ENCODE measurements at regions of chr12 and their contacts with region 1.

Region 1: DNA sequence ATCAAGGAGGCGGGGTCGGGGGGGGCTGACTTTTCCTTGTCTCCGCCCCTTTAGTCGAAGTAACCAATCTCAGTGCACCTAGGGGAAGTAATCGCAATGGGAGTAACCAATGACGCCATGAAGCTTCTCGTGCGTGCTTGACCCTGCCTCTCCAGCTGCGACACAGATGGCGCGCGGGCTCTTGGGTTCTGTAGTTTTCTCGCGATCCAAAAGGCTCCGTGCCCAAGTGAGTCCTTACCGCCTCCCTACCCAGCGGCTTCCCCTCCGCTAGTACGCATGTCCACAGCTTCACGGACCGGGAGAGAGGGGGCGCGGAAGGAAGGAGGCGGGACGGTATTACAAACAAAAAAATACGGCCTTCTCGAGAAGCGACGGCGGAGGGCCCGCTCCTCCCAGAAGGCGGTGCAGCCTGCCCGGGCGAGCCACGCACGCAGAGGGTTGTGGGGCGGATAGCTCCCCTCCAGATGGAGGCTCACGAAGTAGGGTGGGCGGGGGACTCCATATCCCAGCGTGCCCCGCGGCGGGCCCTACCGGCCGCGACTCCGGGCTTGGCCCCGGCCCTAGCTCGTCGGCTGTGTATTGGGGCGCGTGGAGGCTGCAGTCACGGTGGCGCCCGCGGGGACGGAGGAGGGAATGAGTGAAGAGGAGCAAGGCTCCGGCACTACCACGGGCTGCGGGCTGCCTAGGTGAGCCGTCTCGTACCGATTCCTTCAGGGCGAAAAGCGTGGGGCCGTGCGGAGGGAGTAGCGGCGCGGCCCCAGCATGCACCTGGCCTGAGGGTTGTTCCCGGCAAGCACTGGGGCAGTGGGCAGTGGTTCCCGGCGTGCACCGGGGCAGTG is at the start of gene TARBP2:
- DNase-seq: peak; percentile 99
- H3K4me3 Mint-ChIP-seq: peak within 1 kb of the TSS; percentile 80
- H3K27ac Mint-ChIP-seq: peak within 1 kb of the TSS; percentile 93
- H3K4me1 Mint-ChIP-seq: peaks cover 36% of the 10 kb centered on the region
- H3K27me3 Mint-ChIP-seq: no peaks in the 10 kb centered on the region
- CTCF ChIP-seq: no peak
- total RNA-seq, gene TARBP2: 26.4 and 27.8 TPM in 2 replicates

Region 2: GRCh38 chr12:53441040-53441833 is 59.8 kb before region 1 on chr12 and contains the start of gene PRR13:
- CTCF ChIA-PET with region 1: interaction called, 3 read pairs
- POLR2A ChIA-PET with region 1: interaction called, 20 read pairs
- intact Hi-C with region 1: loop called (anchors 2 kb)
- DNase-seq: peak; percentile 99
- H3K4me3 Mint-ChIP-seq: peak within 1 kb of the TSS; percentile 95
- H3K27ac Mint-ChIP-seq: peak within 1 kb of the TSS; percentile 94
- H3K4me1 Mint-ChIP-seq: peaks cover 18% of the 10 kb centered on the region
- H3K27me3 Mint-ChIP-seq: no peaks in the 10 kb centered on the region
- CTCF ChIP-seq: no peak
- total RNA-seq, gene PRR13: 147 and 173 TPM in 2 replicates

Region 3: DNA sequence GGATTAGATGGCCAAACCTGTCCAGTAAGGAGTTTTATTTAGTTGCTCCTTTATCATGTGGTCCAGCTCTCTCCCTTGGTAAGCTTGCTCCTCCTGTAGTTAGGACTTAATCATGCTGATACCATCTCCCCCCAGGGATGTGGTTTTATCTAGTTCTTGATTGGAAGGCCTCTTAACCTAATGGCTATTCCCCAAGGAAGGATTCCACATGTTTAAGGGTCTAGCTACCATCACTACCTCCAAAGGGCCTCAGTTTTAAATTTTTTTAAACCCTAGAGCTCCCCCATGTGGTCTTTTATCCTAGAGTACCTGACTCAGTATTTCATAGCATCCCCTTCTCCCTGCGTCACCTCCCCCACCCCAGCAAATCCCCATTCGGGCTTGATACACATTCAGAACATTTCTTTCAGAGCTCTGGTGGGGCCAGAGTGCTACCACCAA is 24.2 kb before region 1 on chr12:
- CTCF ChIA-PET with region 1: interaction called, 3 read pairs
- POLR2A ChIA-PET with region 1: interaction called, 53 read pairs
- intact Hi-C with region 1: no loop called
- DNase-seq: no peak
- H3K4me3 Mint-ChIP-seq: no peak overlapping the region
- H3K27ac Mint-ChIP-seq: no peak overlapping the region
- H3K4me1 Mint-ChIP-seq: peaks cover 18% of the 10 kb centered on the region
- H3K27me3 Mint-ChIP-seq: no peaks in the 10 kb centered on the region
- CTCF ChIP-seq: peak; percentile 21

Region 4: DNA sequence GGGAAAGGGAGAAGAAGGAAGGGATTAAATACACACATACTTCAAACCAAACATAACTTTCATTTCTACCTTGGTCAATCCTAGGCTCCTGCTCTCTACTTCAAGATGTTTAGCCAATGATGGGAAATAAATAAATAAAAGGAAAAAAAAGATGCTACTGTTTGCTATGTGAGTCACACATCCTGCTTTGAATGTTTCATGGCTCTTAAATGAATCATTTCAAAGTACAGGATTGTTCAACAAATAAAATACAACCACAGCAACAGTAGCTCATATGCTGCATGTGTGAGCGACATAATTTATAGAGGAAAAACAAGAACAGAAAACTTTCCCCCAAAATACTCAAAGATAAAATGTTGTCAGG is 60.6 kb after region 1 on chr12:
- CTCF ChIA-PET with region 1: no interaction called
- POLR2A ChIA-PET with region 1: no interaction called
- intact Hi-C with region 1: no loop called
- DNase-seq: peak; percentile 83
- H3K4me3 Mint-ChIP-seq: peak overlapping the region; percentile 52
- H3K27ac Mint-ChIP-seq: peak overlapping the region; percentile 90
- H3K4me1 Mint-ChIP-seq: peaks cover 49% of the 10 kb centered on the region
- H3K27me3 Mint-ChIP-seq: no peaks in the 10 kb centered on the region
- CTCF ChIP-seq: no peak

Region 5: GRCh38 chr12:53625946-53626701 is 125.1 kb after region 1 on chr12 and contains the start of gene ATF7:
- CTCF ChIA-PET with region 1: interaction called, 3 read pairs
- POLR2A ChIA-PET with region 1: interaction called, 24 read pairs
- intact Hi-C with region 1: no loop called
- DNase-seq: peak; percentile 98
- H3K4me3 Mint-ChIP-seq: peak within 1 kb of the TSS; percentile 96
- H3K27ac Mint-ChIP-seq: peak within 1 kb of the TSS; percentile 89
- H3K4me1 Mint-ChIP-seq: peaks cover 18% of the 10 kb centered on the region
- H3K27me3 Mint-ChIP-seq: no peaks in the 10 kb centered on the region
- CTCF ChIP-seq: no peak
- total RNA-seq, gene ATF7: 39.6 and 40.8 TPM in 2 replicates